Activated CD4-positive, alpha-beta T cell treated with anti-CD3 and anti-CD28 coated beads for 36 hours (primary cell): ENCODE measurements at regions of chr3 and their contacts with region 1.

Region 1: GRCh38 chr3:169966428-169966950 is at the start of gene SEC62:
- DNase-seq: peak; percentile 97
- ATAC-seq: peak; percentile 85
- H3K4me3 Mint-ChIP-seq: peak within 1 kb of the TSS; percentile 83
- H3K27ac Mint-ChIP-seq: peak within 1 kb of the TSS; percentile 95
- H3K4me1 Mint-ChIP-seq: peaks cover 62% of the 10 kb centered on the region
- H3K27me3 Mint-ChIP-seq: no peaks in the 10 kb centered on the region
- total RNA-seq, gene SEC62: 62.8 to 74.7 TPM

Region 2: DNA sequence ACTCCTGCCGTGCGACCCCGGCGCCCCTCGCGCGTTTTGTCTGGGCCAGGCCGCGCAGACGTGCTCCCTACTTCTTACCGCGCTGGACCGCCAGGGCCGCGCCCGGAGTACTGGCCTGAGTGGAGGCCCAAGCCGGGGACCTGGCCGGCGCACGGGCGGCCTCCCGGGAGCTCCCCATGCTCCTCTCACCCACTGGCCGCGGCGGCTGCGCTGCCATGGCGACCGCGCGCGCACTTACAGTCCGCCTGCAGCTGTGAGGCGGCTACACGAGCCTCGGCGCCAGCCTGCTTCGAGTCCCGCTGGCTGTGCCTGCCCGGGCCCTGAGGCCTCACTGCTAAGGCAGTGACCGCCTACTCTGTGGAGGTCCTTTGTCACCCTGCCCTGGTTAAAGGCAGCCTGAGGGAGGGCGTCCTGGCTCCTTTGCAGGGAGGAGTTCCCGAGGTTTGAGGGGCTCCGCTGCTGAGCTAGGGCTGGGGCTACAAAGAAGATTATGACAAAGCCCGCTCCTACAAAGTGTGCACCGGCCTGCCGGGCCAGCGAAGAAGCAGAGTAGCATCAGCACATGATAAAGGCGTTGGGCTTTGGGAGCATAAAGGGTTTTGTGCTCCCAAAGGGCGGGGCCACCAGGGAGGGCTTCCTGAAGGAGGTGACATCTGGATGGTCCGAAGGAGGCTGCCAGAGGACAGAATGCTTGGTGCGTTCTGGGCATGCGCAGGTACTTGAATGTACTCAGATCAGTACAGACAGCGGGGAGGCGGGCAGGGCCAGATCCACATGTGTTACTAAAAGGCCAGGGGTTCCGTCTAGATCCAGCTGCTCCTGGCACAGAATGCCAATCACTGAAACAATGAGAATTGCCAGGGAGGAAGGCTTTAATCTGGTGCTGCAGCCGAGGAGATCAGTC is 153.9 kb before region 1 on chr3 and contains the starts of genes LRRC34 and LRRIQ4:
- CTCF ChIA-PET with region 1: interaction called, 3 read pairs
- POLR2A ChIA-PET with region 1: interaction called, 3 read pairs
- intact Hi-C with region 1: loop called (anchors 2 to 5 kb)
- DNase-seq: peak; percentile 90
- ATAC-seq: peak; percentile 77
- H3K4me3 Mint-ChIP-seq: peak within 1 kb of the TSS; percentile 77
- H3K27ac Mint-ChIP-seq: peak within 1 kb of the TSS; percentile 82
- H3K4me1 Mint-ChIP-seq: peaks cover 27% of the 10 kb centered on the region
- H3K27me3 Mint-ChIP-seq: peaks cover 2% of the 10 kb centered on the region
- total RNA-seq, gene LRRC34: 3.8 TPM
- total RNA-seq, gene LRRIQ4: 0.09 to 0.12 TPM

Region 3: DNA sequence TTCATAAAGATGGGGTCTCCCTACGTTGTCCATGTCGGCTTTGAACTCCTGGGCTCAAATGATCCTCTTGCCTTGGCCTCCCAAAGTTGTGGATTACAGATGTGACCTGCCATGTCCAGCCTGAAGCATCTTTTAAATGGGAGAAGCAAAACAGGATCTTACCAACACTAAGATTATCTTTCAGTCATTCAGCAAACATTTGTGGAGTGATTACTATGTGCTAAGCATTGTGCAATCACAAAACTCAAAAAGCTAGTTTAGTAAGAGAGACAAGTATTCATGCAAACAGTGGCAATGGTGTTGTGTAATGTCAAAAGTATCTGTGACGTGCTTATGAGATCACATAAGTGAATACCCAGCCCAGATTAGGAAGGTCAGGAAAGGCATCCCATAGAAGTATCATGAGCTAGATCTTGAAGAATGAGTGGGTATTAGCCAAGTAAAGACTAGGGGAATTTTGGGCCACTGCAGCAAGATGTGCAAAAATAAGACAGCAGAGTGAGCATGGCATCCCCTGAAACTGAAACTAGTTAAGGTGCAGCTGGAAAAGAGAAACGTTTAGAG is 32.2 kb after region 1 on chr3:
- CTCF ChIA-PET with region 1: interaction called, 3 read pairs
- POLR2A ChIA-PET with region 1: no interaction called
- intact Hi-C with region 1: loop called (anchors 1 to 2 kb)
- DNase-seq: peak; percentile 24
- ATAC-seq: peak; percentile 61
- H3K4me3 Mint-ChIP-seq: no peak overlapping the region
- H3K27ac Mint-ChIP-seq: peak overlapping the region; percentile 89
- H3K4me1 Mint-ChIP-seq: peaks cover 35% of the 10 kb centered on the region
- H3K27me3 Mint-ChIP-seq: no peaks in the 10 kb centered on the region

Region 4: GRCh38 chr3:170221924-170222646 is 255.6 kb after region 1 on chr3 and contains the start of gene PRKCI:
- CTCF ChIA-PET with region 1: no interaction called
- POLR2A ChIA-PET with region 1: no interaction called
- intact Hi-C with region 1: loop called in 1 of 2 experiments (anchors 1 kb)
- DNase-seq: peak; percentile 95
- ATAC-seq: peak; percentile 95
- H3K4me3 Mint-ChIP-seq: peak within 1 kb of the TSS; percentile 89
- H3K27ac Mint-ChIP-seq: peak within 1 kb of the TSS; percentile 95
- H3K4me1 Mint-ChIP-seq: peaks cover 32% of the 10 kb centered on the region
- H3K27me3 Mint-ChIP-seq: no peaks in the 10 kb centered on the region
- total RNA-seq, gene PRKCI: 32.3 to 33.0 TPM

Region 5: DNA sequence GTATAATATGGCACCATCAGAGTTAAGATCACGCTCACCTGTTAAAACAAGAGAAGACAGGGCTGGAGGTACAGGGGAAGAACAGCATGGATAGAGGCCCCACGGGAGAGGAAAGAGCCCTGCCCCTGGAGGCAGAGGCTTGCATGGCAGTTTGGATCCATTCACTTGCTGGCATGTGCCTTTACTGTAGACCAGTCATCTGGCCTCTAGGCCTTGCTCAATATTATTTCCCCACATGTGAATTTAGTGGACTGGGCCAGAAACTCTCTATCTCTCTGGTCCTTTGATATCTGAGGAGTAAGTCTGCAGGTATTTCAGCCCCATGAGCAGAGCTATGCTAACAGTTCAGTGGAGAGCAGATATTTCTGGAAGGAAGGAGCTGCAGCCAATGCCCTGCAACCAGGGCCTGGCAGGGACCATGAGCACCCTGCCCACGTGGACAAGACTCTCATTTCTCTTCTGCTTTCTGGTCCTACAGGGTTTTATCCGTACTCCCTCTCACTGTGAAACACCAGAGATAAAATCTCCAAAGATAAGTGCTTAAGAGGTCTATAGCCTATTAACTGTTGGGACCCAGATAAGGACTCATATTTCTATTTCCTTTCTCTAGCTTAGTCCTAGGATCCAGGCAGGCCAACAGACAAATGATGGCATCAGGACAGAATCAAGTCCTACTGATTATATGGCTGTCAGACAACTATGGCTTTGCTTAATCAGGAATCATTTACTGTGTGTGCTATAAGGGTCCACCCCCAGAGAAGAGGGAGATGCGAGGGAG is 517.2 kb after region 1 on chr3:
- CTCF ChIA-PET with region 1: no interaction called
- POLR2A ChIA-PET with region 1: no interaction called
- intact Hi-C with region 1: no loop called
- DNase-seq: peak; percentile 9
- ATAC-seq: no peak
- H3K4me3 Mint-ChIP-seq: no peak overlapping the region
- H3K27ac Mint-ChIP-seq: no peak overlapping the region
- H3K4me1 Mint-ChIP-seq: no peaks in the 10 kb centered on the region
- H3K27me3 Mint-ChIP-seq: peaks cover 13% of the 10 kb centered on the region

Region 6: DNA sequence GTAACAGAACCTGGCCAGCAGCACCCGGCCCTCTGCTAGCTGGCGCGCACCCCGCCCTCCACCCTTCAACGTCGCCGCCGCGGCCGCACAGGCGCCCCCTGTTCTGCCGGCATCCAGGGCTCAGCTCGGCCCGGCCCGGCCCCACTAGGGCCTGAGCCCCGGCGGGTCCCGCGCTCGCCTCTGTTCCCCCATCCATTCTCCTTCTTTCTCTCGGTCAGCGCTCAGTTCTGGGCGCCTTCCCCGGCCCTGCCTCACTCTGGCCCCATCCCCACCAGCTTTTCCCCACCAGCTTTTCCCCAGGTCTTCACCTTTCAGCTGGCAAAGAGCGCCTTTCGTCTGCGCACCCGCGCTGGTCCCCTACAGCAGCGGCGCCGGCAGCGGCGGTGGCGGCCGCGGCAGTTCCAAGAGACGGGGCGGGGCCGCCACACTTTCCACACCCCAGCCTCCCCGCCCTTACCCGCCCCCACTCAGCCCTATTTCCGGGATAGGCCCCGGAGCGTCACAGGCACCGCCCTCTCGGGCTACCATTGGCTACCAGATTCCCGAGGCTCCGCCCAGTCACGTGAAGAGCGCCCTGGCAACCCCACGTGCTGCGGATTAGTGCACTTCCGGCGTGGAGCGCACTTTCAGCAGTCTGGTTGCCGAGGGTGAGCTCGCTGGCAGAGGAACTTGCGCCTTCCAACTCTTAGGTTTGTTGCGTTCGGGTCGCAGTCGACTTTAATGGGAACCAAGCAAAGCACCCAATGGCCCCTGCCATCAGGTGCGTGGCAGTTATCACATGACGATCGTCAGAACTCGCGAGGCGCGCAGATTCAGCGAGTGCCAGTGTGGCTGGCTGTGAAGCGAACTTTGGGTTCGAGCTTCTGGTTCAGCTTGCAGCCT is 942.0 kb after region 1 on chr3 and contains the start of gene EIF5A2:
- CTCF ChIA-PET with region 1: no interaction called
- POLR2A ChIA-PET with region 1: no interaction called
- intact Hi-C with region 1: loop called in 1 of 2 experiments (anchors 2 kb)
- DNase-seq: peak; percentile 98
- ATAC-seq: peak; percentile 98
- H3K4me3 Mint-ChIP-seq: peak within 1 kb of the TSS; percentile 75
- H3K27ac Mint-ChIP-seq: peak within 1 kb of the TSS; percentile 91
- H3K4me1 Mint-ChIP-seq: peaks cover 16% of the 10 kb centered on the region
- H3K27me3 Mint-ChIP-seq: no peaks in the 10 kb centered on the region
- total RNA-seq, gene EIF5A2: 4.7 to 5.7 TPM